H1 (cell line): ENCODE measurements at regions of chr1 and their contacts with region 1.

Region 1: DNA sequence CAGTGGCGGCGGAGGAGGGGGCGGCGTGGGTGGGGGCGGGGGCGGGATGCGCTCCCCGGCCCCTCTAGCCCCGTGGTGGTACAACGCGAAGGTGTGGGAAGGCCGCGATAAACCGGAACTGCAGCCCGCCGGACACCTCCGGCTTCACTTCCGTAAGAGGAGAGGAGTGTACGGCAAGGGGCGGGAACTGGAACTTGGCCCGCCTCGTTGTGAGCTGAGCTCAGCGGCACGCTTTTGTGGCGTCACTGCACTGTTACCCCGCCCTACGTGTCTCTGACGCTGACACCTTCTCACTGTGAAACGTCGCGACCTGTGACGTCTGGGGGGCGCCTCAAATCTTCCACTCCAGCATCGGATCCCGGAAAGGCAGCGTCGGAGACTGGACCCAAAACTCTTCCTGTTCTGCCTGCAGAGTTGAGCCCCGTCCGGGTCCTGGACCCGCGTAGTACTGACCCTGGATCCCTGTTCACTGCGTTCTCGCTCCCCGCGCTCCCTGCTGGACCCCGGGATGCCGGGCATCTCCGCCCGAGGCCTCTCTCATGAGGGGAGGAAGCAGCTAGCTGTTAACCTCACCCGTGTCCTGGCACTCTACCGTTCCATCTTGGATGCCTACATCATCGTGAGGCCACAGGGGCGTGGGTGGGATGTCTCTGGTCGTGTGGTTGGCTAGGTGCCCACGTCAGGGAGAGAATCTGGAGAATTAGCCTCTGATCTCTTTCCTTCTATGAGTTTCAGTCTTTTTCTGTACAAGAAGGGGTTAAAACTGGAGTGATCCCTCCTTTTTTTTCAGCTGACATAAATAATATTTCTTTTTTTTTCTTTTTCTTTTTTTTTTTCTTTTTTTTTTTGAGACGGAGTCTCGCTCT is at the start of gene ISG20L2:
- DNase-seq: peak; percentile 91 to 93
- H3K4me3 ChIP-seq: peak within 1 kb of the TSS; percentile 83 to 100 (median 94)
- H3K27ac ChIP-seq: peak within 1 kb of the TSS; percentile 89
- H3K4me1 ChIP-seq: peaks cover 0 to 23% (median 18%) of the 10 kb centered on the region in 4 experiments; a peak in 6 of 7 replicates
- H3K27me3 ChIP-seq: no peaks in the 10 kb centered on the region
- CTCF ChIP-seq: no peak
- EP300 ChIP-seq: no peak
- POLR2A ChIP-seq: peak; percentile 91 to 92
- RAD21 ChIP-seq: no peak
- total RNA-seq, gene ISG20L2: 47.5 and 53.1 TPM in 2 replicates

Region 2: GRCh38 chr1:156625436-156626078 is 103.3 kb before region 1 on chr1:
- CTCF ChIA-PET with region 1: interaction called, 19 read pairs
- POLR2A ChIA-PET with region 1: no interaction called
- DNase-seq: peak in 1 of 2 experiments; percentile 84
- H3K4me3 ChIP-seq: peak overlapping the region; percentile 44 to 71 (median 46)
- H3K27ac ChIP-seq: no peak overlapping the region
- H3K4me1 ChIP-seq: peaks cover 0 to 9% (median 2%) of the 10 kb centered on the region in 4 experiments; a peak in 5 of 7 replicates
- H3K27me3 ChIP-seq: peaks cover 31 to 50% (median 38%) of the 10 kb centered on the region in 4 experiments
- CTCF ChIP-seq: peak; percentile 69 to 84 (median 75)
- EP300 ChIP-seq: no peak
- POLR2A ChIP-seq: no peak
- RAD21 ChIP-seq: peak; percentile 77 to 81

Region 3: GRCh38 chr1:156689035-156689952 is 39.5 kb before region 1 on chr1:
- CTCF ChIA-PET with region 1: interaction called, 4,284 read pairs
- POLR2A ChIA-PET with region 1: interaction called, 135 read pairs
- DNase-seq: peak in 1 of 2 experiments; percentile 92
- H3K4me3 ChIP-seq: peak overlapping the region in 3 of 4 experiments; percentile 36 to 55 (median 52); a peak in 6 of 8 replicates
- H3K27ac ChIP-seq: no peak overlapping the region
- H3K4me1 ChIP-seq: peaks cover 20 to 47% (median 36%) of the 10 kb centered on the region in 4 experiments
- H3K27me3 ChIP-seq: peaks cover 0 to 7% (median 0%) of the 10 kb centered on the region in 4 experiments; a peak in 2 of 7 replicates
- CTCF ChIP-seq: peak; percentile 91 to 98 (median 97)
- EP300 ChIP-seq: no peak; a peak in 1 of 3 replicates
- POLR2A ChIP-seq: no peak
- RAD21 ChIP-seq: peak; percentile 99 to 100

Region 4: GRCh38 chr1:156746728-156747631 is 18.1 kb after region 1 on chr1:
- CTCF ChIA-PET with region 1: interaction called, 76 read pairs
- POLR2A ChIA-PET with region 1: interaction called, 214 read pairs
- DNase-seq: peak in 1 of 2 experiments; percentile 91
- H3K4me3 ChIP-seq: peak overlapping the region; percentile 52 to 100 (median 64)
- H3K27ac ChIP-seq: peak overlapping the region; percentile 100
- H3K4me1 ChIP-seq: peaks cover 32 to 47% (median 33%) of the 10 kb centered on the region in 4 experiments
- H3K27me3 ChIP-seq: no peaks in the 10 kb centered on the region
- CTCF ChIP-seq: peak in 2 of 3 experiments; percentile 26 to 37; a peak in 3 of 4 replicates
- EP300 ChIP-seq: no peak
- POLR2A ChIP-seq: peak; percentile 82 to 89
- RAD21 ChIP-seq: no peak; a peak in 1 of 4 replicates

Region 5: GRCh38 chr1:156773607-156774006 is 44.8 kb after region 1 on chr1:
- CTCF ChIA-PET with region 1: interaction called, 100 read pairs
- POLR2A ChIA-PET with region 1: interaction called, 69 read pairs
- DNase-seq: no peak
- H3K4me3 ChIP-seq: no peak overlapping the region
- H3K27ac ChIP-seq: no peak overlapping the region
- H3K4me1 ChIP-seq: peaks cover 0 to 5% (median 2%) of the 10 kb centered on the region in 4 experiments; a peak in 3 of 7 replicates
- H3K27me3 ChIP-seq: no peaks in the 10 kb centered on the region
- CTCF ChIP-seq: no peak
- EP300 ChIP-seq: no peak
- POLR2A ChIP-seq: no peak
- RAD21 ChIP-seq: no peak

Region 6: DNA sequence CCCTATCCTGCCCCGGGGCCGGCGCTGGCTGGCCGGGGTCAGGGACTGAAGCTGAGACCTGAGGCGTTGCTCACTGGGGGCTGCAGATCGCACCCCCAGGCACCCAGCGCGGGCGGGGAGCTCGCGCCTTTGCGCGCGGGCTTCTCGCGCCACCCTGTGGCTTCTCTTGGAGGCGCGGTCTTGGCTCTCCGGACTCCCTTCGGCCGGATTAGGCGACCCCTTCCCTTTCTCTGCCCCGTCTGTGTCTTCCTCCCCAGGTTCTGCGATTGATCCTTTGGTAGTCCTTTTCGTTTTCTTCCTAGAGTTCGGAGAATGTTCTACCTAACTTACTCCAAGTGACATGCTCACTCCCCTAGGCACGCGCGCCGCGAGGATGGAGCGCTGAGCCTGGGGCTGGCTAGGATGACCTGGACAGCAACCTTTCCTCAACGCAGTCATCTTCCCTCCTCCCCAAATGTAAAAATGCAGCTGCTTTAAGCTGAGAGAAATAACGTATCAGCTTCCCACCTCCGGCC is 131.3 kb after region 1 on chr1:
- CTCF ChIA-PET with region 1: interaction called, 41 read pairs
- POLR2A ChIA-PET with region 1: interaction called, 3 read pairs
- DNase-seq: peak in 1 of 2 experiments; percentile 85
- H3K4me3 ChIP-seq: peak overlapping the region; percentile 31 to 62 (median 58)
- H3K27ac ChIP-seq: no peak overlapping the region
- H3K4me1 ChIP-seq: peaks cover 0 to 15% (median 9%) of the 10 kb centered on the region in 4 experiments; a peak in 6 of 7 replicates
- H3K27me3 ChIP-seq: peaks cover 55 to 87% (median 82%) of the 10 kb centered on the region in 4 experiments
- CTCF ChIP-seq: peak; percentile 67 to 80 (median 74)
- EP300 ChIP-seq: no peak
- POLR2A ChIP-seq: no peak
- RAD21 ChIP-seq: peak; percentile 76 to 83